Sciatic nerve (tissue), 2 donors: ENCODE measurements at regions of chr1 and their contacts with region 1.

Region 1: DNA sequence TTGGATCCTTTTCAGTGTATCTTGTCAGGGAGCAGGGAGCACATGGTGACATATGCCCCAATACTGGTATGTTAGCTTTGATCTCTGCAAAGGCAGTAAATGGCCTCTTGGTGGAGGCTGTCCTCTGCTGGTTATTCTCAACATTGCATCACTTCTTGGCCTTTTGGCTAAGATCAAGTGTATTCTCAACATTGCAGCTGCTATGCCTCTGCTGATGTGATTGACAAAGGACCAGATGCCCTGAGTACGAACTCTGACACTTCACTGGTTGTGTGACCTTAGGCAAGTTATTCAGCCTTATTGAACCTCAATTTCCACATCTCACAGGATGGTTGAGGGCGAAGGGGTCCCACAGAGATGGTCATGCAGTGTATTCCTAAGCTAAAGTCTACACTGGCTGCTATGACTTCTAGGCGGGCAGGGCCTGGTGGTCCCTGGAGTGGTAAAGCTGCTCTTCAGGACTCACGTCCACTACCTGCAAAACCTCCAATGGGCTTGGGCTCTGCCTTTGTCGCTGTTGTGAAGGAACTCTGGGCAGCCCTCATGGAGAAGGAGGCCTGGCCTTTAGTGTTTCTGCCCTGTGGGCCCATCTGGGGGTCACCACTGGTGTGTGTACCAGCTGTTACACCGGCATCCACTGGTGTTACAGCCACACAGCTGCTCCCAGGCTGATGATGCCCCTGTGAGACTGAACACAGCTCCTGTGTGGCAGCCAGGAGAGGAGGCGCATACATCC is 64.8 kb downstream of the DNTTIP2 start:
- DNase-seq: peak; percentile 71
- ATAC-seq: peak; percentile 74

Region 2: GRCh38 chr1:93447516-93448291 is 366.5 kb before region 1 on chr1 and contains the start of gene FNBP1L:
- intact Hi-C with region 1: loop called (anchors 5 kb)
- DNase-seq: peak; percentile 84
- ATAC-seq: peak; percentile 94
- total RNA-seq, gene FNBP1L: 25.5 TPM

Region 3: GRCh38 chr1:93708734-93709481 is 105.3 kb before region 1 on chr1:
- intact Hi-C with region 1: no loop called
- DNase-seq: no peak
- ATAC-seq: peak; percentile 80

Region 4: DNA sequence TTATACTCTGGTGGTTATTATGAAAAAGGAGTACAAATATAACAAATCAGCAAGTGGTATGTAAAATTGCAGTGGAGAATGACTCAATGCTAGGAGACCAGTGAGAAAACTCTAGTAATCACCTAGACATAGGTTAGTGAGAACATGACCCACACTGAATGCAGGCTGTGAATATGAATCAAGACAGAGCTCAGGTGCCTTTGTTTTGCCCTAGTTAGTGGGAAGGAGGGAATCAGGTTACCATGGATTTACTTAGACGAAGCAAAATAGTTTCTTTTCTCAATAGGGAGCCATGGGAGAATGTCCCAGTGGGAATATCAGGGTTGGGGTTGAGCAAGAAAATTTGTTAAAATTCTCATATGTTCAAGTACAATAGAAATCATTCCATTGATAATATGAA is 105.6 kb after region 1 on chr1:
- intact Hi-C with region 1: no loop called
- DNase-seq: no peak
- ATAC-seq: no peak

Region 5: DNA sequence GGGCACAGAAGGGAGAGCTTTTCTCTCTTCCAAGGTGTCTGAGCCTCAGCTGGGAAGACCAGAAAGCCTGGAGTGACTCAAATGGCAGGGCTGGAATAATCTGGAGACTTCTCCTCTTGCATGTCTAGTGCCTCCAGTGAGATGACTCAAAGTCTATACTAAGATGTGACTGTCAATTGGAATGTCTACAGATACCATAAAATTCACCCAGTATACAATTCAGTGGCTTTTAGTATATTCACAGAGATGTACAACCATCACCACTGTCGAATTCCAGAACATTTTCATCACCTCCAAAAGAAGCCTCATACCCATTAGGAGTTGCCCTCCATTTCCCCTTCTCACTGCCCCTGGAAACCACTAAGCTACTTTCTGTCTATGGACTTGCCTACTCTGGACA is 1160.6 kb after region 1 on chr1:
- intact Hi-C with region 1: no loop called
- DNase-seq: no peak
- ATAC-seq: no peak